ENCODE measurements at regions of chr15 and their contacts with region 1.

Region 1: GRCh38 chr15:49046220-49047102 is at the start of gene SECISBP2L:
- DNase-seq: peak; percentile 96
- H3K4me3 ChIP-seq: peak within 1 kb of the TSS; percentile 91 to 99 (median 95)
- H3K27ac ChIP-seq: peak within 1 kb of the TSS; percentile 91 to 95 (median 93)
- H3K4me1 ChIP-seq: peaks cover 0 to 40% (median 36%) of the 10 kb centered on the region in 4 donors
- H3K27me3 ChIP-seq: no peaks in the 10 kb centered on the region
- CTCF ChIP-seq: no peak
- EP300 ChIP-seq: peak in 1 of 4 donors; percentile 35
- POLR2A ChIP-seq: peak; percentile 80 to 89
- total RNA-seq, gene SECISBP2L: 34.1 to 47.6 (median 41.2) TPM

Region 2: DNA sequence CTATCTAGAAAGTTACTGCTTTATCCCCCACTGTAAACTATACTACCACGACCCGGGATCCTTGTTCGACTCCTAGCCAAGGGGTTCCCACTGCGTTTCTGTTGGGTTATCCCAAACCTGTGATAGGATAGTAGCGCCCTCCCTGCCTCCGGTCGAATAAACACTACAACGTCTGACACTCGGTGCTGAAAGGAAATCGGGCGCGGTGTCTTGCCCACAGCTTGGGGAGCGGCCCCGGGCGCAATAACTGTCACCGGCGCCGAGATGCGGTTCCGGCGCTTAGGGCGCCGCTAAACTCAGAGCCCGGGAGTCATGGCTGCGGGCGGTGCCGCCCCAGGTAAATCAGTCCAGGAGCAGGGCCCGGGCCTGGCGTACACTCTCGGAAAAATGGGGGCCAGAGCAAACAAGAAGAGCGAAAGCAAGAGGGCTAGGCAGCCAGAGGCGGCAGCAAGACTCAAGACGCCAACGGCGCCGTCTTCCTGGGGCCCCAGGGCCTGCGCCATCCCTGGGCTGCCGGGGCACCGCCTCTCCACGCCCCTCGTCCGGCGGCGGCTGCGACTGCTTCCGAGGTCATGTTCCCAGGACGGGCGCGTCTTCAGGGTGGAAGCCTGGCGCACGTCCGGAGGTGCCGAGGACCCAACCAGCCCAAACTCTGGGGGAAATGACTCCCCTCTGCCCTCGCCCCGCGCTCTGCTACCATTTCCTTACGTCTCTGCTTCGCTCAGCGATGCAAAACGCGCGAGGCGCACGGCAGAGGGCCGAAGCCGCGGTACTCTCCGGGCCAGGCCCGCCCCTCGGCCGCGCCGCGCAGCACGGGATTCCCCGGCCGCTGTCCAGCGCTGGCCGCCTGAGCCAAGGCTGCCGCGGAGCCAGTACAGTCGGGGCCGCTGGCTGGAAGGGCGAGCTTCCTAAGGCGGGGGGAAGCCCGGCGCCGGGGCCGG is 715.3 kb before region 1 on chr15 and contains the start of gene DUT:
- intact Hi-C with region 1: loop called (anchors 5 kb)
- DNase-seq: peak; percentile 93
- H3K4me3 ChIP-seq: peak within 1 kb of the TSS; percentile 57 to 87 (median 72)
- H3K27ac ChIP-seq: peak within 1 kb of the TSS; percentile 94 to 98 (median 96)
- H3K4me1 ChIP-seq: peaks cover 0 to 20% (median 15%) of the 10 kb centered on the region in 4 donors
- H3K27me3 ChIP-seq: no peaks in the 10 kb centered on the region
- CTCF ChIP-seq: no peak
- EP300 ChIP-seq: no peak
- POLR2A ChIP-seq: peak; percentile 79 to 85
- total RNA-seq, gene DUT: 76.2 to 109 (median 102) TPM

Region 3: DNA sequence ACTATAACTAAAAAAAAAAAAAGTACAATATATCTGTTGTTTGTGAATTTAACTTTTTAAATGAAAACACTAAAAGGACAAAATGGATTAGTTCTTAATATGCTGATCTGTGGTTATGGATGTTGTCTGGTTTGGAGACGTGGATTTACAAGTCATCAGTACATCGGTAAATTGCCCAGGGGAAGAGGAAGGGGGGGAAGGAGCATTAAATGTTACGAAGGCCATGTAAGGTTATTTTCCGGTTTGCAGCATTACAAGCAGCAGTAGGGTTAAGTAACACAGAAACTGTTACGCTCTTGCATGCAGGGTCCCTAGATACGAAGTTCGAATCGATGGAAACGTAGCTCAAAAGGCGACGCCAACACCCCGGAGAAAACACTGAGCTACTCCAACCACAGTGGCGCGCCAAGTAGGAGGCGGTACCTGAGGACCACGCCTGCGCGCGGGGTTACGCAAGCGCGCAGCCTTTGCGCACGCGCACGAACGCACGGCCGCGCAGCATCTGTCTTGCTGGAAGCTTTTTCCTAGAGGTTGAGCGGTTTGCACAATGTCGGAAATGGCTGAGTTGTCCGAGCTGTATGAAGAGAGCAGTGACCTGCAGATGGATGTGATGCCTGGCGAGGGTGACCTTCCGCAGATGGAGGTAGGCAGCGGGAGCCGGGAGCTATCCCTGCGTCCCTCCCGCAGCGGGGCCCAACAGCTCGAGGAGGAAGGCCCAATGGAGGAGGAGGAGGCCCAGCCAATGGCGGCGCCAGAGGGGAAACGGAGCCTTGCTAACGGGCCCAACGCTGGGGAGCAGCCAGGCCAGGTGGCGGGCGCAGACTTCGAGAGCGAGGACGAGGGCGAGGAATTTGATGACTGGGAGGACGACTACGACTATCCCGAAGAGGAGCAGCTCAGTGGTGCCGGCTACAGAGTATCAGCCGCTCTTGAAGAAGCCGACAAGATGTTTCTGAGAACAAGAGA is 168.5 kb before region 1 on chr15 and contains the start of gene EID1:
- intact Hi-C with region 1: loop called (anchors 5 kb)
- DNase-seq: peak; percentile 97
- H3K4me3 ChIP-seq: peak within 1 kb of the TSS; percentile 72 to 89 (median 81)
- H3K27ac ChIP-seq: peak within 1 kb of the TSS; percentile 91 to 95 (median 92)
- H3K4me1 ChIP-seq: peaks cover 0 to 20% (median 11%) of the 10 kb centered on the region in 4 donors
- H3K27me3 ChIP-seq: no peaks in the 10 kb centered on the region
- CTCF ChIP-seq: no peak
- EP300 ChIP-seq: no peak
- POLR2A ChIP-seq: peak; percentile 76 to 81
- total RNA-seq, gene EID1: 291 to 343 (median 332) TPM

Region 4: DNA sequence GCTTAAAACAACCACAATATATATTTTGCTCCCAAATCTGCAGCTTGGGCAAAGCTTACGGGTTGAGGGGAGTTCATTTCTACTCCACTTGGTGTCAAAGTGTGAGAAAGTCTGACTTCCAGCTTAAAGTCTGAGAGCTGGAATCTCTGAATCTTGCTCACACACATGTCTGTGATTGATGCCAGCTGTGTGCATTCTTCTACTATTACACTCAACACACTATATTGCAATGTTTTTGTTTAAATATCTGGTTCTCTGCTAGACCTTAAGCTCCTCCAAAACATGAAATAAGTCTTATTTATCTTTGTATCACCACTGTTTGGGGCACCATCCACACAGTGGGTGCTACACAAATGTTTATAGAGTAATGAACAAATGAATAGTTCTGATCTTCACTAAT is 36.5 kb after region 1 on chr15:
- intact Hi-C with region 1: no loop called
- DNase-seq: no peak
- H3K4me3 ChIP-seq: no peak overlapping the region
- H3K27ac ChIP-seq: no peak overlapping the region
- H3K4me1 ChIP-seq: no peaks in the 10 kb centered on the region
- H3K27me3 ChIP-seq: no peaks in the 10 kb centered on the region
- CTCF ChIP-seq: no peak
- EP300 ChIP-seq: no peak
- POLR2A ChIP-seq: no peak

Region 5: GRCh38 chr15:49155110-49155833 is 108.8 kb after region 1 on chr15 and contains the start of gene COPS2:
- intact Hi-C with region 1: loop called (anchors 5 kb)
- DNase-seq: peak; percentile 97
- H3K4me3 ChIP-seq: peak within 1 kb of the TSS; percentile 73 to 98 (median 88)
- H3K27ac ChIP-seq: peak within 1 kb of the TSS; percentile 86 to 97 (median 92)
- H3K4me1 ChIP-seq: peaks cover 0 to 48% (median 37%) of the 10 kb centered on the region in 4 donors
- H3K27me3 ChIP-seq: no peaks in the 10 kb centered on the region
- CTCF ChIP-seq: no peak
- EP300 ChIP-seq: peak in 2 of 4 donors; percentile 5 to 66
- POLR2A ChIP-seq: peak in 1 of 2 donors; percentile 38
- total RNA-seq, gene COPS2: 88.9 to 142 (median 98.5) TPM

Region 6: DNA sequence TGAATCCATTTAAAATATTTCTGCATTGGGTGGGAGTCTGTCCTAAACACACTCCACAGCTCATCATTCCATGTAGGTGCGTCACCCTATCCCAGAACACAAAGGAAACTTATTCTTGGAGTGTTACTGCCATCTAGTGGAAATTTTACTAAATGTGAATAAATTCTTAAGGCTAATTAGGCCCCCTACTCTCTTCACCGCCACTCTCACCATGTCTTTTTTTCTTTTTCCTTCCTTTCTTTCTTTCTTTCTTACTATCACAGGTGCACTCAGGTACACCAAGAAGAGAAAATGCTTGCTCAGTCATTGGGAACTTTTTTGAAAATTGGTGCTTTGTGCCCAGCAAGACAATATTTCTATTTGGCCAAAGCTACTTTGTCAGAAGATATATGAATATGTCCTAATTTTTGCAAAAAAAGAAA is 1099.0 kb after region 1 on chr15:
- intact Hi-C with region 1: loop called (anchors 10 kb)
- DNase-seq: no peak
- H3K4me3 ChIP-seq: no peak overlapping the region
- H3K27ac ChIP-seq: no peak overlapping the region
- H3K4me1 ChIP-seq: peaks cover 0 to 15% (median 5%) of the 10 kb centered on the region in 4 donors
- H3K27me3 ChIP-seq: no peaks in the 10 kb centered on the region
- CTCF ChIP-seq: peak; percentile 43 to 62 (median 53)
- EP300 ChIP-seq: no peak
- POLR2A ChIP-seq: no peak

Measured in sigmoid colon (tissue), 7 donors.